ENCODE measurements at regions of chr15 and their contacts with region 1.

Region 1: DNA sequence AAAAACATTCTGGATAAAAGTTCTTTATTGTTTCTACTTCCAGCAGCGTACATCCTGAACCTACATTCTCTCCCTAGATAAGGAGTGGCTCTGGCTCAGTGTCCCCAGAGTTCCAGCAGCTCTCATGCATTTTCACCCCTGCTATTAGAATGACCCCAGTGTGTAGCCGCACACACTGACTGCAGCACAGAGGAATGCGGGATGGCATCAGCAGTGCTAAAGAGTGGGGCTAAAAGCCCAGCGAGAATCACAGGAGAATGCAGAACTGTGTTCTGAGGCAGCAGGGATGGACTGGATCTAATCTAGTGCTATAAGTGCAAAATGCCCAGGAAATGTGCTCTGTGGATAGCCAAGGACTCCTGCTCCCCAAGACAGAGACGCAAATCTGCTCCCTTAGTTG is 66.4 kb upstream of the TJP1 start:
- DNase-seq: peak; percentile 49
- ATAC-seq: peak; percentile 86

Region 2: DNA sequence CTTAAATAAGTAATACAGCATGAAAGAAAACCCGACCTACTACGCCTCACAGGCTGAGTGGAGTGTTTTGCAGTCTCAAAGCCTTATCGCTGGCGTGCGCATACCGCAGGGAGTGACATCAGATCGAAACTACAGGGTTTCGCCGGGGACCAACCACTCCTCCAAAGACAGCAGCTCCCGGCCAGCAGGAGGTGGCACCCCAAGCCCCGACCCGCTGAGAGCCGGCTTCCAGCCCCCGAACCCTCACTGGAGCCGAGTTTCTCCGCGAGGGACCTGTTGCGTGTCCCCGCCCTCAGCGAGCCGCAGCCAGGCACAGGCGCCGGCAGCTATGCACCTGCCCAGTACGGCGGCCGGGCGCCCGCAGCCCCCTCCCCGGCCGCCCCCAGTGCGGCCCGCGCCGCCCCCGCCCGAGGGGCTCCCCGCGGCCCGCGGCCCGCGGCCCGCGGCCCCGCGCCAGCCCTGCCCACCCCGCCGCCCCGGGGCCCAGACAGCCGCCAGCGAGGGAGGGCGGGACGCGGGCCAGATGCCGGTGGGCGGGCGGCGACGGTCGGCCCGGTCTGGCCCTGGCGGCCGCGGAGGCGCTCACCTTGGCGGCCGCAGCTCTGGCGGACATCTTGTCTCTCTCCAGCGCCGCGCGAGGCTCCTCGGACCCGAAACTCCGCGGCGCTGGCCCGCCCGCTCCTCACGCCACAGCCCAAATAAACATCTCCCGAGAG is 67.1 kb before region 1 on chr15:
- intact Hi-C with region 1: loop called (anchors 10 kb)
- DNase-seq: peak; percentile 85
- ATAC-seq: peak; percentile 53

Region 3: DNA sequence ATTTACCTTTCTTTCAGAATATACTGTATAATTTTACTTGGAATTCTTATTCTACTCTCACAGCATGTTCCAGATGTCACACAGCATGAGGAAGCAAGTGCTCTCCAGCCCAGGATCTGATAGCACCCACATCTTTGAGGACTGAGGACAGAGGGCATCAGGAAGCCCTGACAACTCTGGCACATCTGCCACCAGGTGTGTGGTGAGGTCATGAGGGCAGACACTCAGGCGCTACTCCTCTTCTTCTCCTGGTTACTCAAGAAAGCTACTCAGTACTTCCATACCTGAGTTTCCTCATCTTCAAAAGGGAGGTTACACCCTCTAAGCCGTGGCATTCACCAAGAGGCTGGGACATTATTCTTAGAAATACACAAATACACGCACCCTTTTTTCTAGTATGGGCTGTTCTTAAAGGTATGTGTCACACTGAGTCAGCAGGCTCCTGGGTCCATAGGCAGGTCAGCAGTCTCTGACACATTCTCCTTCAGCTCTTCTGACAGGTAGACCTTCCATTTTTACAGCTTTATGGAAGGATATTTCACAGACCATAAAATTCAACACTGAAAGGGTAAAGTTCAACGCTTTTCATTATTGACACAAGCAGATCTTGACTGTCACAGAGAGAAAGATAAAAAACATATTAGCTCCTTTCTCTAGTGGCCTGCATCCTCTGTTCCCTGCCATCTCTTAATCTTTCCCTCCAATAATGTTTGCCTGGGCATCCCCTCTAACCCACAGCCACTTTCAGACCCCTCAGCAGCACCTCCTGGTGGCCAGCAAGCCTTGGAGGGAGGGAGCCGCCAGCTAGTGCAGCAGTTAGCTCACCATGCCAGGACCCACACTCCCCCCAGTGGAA is 36.8 kb after region 1 on chr15:
- intact Hi-C with region 1: no loop called
- DNase-seq: peak; percentile 81
- ATAC-seq: peak; percentile 94

Region 4: GRCh38 chr15:29952225-29952624 is 63.6 kb after region 1 on chr15:
- intact Hi-C with region 1: no loop called
- DNase-seq: no peak
- ATAC-seq: no peak